ENCODE measurements at regions of chr7 and their contacts with region 1.

Region 1: DNA sequence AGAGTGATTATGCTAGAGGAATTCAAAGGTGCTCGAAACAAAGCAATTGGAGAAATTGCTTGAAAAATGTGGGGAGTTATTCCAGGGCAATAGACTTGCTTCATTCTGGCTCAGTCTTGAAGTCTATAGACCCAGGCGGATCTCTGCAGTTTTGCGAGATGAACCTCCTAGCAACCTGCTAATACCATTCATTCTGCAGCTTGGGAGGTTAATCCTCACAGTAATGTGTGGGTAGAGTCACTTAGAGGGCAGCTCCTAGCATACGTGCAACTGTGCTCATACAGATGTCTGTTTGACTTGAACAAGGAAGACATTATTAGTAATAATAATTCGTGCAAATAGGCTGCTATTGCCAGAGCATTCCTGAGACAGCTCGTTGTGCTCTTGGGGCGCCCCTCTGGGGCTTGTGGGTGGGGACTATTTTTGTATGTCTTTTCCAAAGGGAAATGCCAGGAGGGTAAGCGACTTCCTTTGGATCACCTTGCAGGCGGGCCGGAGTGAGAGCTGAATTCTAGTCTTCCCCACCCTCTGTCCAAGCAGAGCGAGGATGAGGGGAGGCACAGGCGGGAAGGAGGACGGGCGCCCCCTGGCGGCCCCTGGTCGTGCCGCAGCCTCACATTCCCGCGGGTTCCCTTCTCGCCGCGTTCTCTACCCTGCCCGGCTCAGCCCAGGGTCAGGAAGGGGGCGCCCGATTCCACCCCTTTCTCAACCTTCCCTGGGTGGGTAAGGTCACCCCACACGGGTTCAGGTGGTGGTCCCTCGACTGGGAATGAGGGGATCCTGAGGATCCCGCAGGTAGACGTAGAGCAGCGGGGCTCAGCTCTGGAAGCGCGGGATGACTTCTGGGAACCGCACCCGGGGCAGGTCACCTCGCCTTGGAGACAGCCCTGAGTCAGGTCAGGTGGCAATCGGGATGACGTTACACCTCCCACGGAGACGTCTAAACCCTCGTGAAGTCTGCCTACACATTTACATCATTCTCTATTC is 241.5 kb downstream of the PHTF2 start:
- ATAC-seq: peak in 7 of 8 experiments; percentile 25 to 98 (median 50)
- H3K4me3 ChIP-seq: no peak overlapping the region
- H3K27ac ChIP-seq: no peak overlapping the region
- H3K4me1 ChIP-seq: peaks cover 5 to 11% of the 10 kb centered on the region in 2 donors

Region 2: DNA sequence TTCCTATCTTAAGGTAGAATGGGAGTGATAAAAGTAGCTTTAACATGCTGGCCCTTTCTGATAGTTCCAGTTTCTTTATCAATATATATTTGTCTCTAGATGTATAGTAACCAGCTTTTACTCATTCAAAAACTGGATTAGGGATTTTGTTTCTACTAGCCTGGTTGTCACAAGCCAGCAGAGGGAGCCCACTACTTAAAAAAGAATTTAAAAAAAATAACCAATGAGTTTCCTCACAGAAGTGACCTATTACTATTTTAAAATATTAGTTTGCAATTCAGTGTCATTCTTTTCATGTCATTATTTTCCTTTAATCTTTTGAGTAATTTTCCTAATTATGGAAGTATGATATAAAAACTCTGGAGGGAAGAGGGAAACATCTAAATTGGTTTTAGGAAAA is 99.4 kb before region 1 on chr7:
- in situ Hi-C with region 1: no loop called
- ATAC-seq: peak in 3 of 8 experiments; percentile 40 to 50 (median 44)
- H3K4me3 ChIP-seq: no peak overlapping the region
- H3K27ac ChIP-seq: no peak overlapping the region
- H3K4me1 ChIP-seq: no peaks in the 10 kb centered on the region

Region 3: GRCh38 chr7:78197447-78197846 is 157.4 kb after region 1 on chr7:
- in situ Hi-C with region 1: no loop called
- ATAC-seq: no peak
- H3K4me3 ChIP-seq: no peak overlapping the region
- H3K27ac ChIP-seq: no peak overlapping the region
- H3K4me1 ChIP-seq: peaks cover 0 to 7% of the 10 kb centered on the region in 2 donors

Region 4: DNA sequence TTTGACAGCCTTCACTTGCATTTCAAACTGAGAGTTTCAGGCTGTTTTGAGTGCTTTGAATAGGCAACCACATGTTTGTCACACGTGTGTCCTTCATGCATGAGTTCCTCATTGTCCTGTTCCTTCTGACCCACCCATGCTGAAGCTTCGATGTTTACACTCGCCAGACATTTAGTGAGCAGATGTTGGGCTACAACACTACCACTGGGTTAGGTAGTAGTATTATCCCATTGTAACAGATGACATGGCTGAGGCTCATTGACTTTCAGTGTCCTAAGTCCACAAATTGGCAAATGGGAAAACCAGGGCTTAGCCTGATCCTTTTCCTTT is 214.6 kb after region 1 on chr7:
- in situ Hi-C with region 1: no loop called
- ATAC-seq: peak in 2 of 8 experiments; percentile 36 to 79
- H3K4me3 ChIP-seq: no peak overlapping the region
- H3K27ac ChIP-seq: no peak overlapping the region
- H3K4me1 ChIP-seq: no peaks in the 10 kb centered on the region

Region 5: GRCh38 chr7:79149866-79150265 is 1109.8 kb after region 1 on chr7:
- in situ Hi-C with region 1: loop called in 1 of 9 experiments (anchors 25 kb)
- ATAC-seq: no peak
- H3K4me3 ChIP-seq: no peak overlapping the region
- H3K27ac ChIP-seq: no peak overlapping the region
- H3K4me1 ChIP-seq: no peaks in the 10 kb centered on the region